Activated CD8-positive, alpha-beta T cell treated with anti-CD3 and anti-CD28 coated beads for 36 hours (primary cell): ENCODE measurements at regions of chr1 and their contacts with region 1.

Region 1: GRCh38 chr1:78114034-78114956 is 68.5 kb downstream of the GIPC2 start:
- DNase-seq: peak; percentile 72
- ATAC-seq: peak; percentile 90
- H3K4me3 Mint-ChIP-seq: no peak overlapping the region
- H3K27ac Mint-ChIP-seq: no peak overlapping the region
- H3K4me1 Mint-ChIP-seq: peaks cover 18% of the 10 kb centered on the region
- H3K27me3 Mint-ChIP-seq: no peaks in the 10 kb centered on the region
- CTCF ChIP-seq: peak; percentile 89

Region 2: DNA sequence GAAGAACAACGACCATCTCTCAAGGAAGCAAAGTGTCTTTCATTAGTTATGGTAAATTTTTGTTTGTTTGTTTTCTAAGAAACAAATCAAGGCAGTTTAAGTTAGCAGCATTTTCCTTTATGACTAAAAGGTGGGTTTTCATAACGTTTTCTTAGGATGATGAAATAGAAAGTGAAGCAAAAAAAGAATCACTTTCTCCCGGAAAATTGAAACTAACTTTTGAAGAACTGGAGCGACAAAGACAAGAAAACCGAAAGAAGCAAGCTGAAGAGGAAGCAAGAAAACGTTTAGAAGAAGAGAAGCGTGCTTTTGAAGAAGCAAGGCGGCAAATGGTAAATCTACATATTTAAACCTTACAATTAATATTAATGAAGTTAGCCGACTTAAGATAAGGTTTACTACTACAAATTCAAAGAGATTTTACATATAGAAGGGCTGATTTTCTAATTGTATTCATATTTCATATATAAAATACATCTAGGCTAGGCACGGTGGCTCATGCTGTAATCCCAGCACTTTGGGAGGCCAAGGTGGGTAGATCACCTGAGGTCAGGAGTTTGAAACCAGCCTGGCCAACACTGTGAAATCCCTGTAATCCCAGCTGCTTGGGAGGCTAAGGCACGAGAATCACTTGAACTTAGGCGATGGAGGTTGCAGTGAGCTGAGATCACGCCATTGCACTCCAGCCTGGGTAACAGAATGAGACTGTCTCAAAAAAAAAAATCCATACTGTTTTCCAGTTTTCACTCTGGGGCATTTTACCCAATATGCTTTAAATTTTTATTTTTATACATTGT is 187.5 kb before region 1 on chr1:
- CTCF ChIA-PET with region 1: interaction called, 5 read pairs
- POLR2A ChIA-PET with region 1: no interaction called
- intact Hi-C with region 1: loop called (anchors 10 kb)
- DNase-seq: no peak
- ATAC-seq: no peak
- H3K4me3 Mint-ChIP-seq: peak overlapping the region; percentile 73
- H3K27ac Mint-ChIP-seq: peak overlapping the region; percentile 74
- H3K4me1 Mint-ChIP-seq: peaks cover 11% of the 10 kb centered on the region
- H3K27me3 Mint-ChIP-seq: no peaks in the 10 kb centered on the region
- CTCF ChIP-seq: no peak

Region 3: GRCh38 chr1:77978969-77979876 is 135.1 kb before region 1 on chr1 and contains the start of gene FUBP1:
- CTCF ChIA-PET with region 1: interaction called, 15 read pairs
- POLR2A ChIA-PET with region 1: interaction called, 3 read pairs
- intact Hi-C with region 1: loop called (anchors 5 kb)
- DNase-seq: peak; percentile 97
- ATAC-seq: peak; percentile 76
- H3K4me3 Mint-ChIP-seq: no peak within 1 kb of the TSS
- H3K27ac Mint-ChIP-seq: no peak within 1 kb of the TSS
- H3K4me1 Mint-ChIP-seq: peaks cover 38% of the 10 kb centered on the region
- H3K27me3 Mint-ChIP-seq: no peaks in the 10 kb centered on the region
- CTCF ChIP-seq: peak; percentile 74
- total RNA-seq, gene FUBP1: 256 to 257 TPM

Region 4: DNA sequence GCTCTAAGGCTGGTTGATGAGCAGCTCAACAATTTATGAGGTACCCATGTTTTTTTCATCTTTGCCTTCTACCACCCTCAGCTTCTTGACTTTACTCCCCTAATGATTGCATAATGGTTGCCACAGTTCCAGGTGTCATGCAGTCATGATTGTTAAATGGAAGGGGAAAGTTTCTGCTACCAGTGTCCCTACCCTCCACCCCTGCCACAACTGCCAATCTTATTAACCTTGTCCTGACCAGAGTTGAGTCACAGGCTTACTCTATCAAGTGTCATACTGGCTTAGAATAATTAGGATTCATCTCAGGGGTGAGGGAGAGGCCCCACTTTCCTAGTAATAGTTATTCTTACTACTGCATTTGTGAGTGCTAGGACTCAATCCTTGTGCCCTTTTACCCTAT is 127.5 kb before region 1 on chr1:
- CTCF ChIA-PET with region 1: interaction called, 15 read pairs
- POLR2A ChIA-PET with region 1: no interaction called
- intact Hi-C with region 1: loop called (anchors 5 kb)
- DNase-seq: peak; percentile 61
- ATAC-seq: peak; percentile 94
- H3K4me3 Mint-ChIP-seq: no peak overlapping the region
- H3K27ac Mint-ChIP-seq: peak overlapping the region; percentile 27
- H3K4me1 Mint-ChIP-seq: peaks cover 58% of the 10 kb centered on the region
- H3K27me3 Mint-ChIP-seq: no peaks in the 10 kb centered on the region
- CTCF ChIP-seq: no peak

Region 5: DNA sequence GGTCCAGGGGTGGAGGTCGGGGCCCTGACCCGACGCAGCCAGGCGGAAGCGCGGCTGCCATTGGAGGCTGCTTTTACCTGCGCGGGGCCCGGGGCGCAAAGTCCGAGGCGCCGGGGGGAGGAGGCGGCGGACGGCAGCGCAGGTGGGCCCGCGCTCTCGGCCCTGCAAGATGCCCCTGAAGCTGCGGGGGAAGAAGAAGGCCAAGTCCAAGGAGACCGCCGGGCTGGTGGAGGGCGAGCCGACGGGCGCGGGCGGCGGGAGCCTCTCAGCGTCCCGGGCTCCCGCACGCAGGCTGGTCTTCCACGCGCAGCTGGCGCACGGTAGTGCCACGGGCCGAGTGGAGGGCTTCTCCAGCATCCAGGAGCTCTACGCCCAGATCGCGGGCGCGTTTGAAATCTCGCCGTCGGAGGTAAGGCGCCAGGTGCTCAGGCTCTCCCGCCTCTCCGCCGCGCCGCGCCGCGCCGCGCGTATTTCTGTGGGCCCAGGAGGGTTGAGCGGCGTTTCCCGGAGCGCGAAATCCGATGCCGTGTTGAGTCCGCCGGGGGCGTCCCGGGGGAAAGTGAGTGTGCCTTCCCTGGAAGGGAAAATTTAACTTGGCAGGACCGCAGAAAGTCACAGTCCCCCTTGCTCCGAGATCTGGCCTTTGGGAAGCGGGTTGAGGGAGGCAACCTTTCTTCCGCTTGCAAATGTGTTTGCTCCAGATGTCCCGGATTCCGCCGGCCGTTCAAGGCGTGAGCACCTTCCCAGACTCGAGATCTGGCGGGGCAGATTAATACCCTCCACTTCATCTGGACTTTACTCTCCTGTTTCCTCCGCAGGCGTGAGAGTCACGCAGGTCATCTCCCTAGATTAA is 68.1 kb before region 1 on chr1 and contains the start of gene GIPC2:
- CTCF ChIA-PET with region 1: interaction called, 11 read pairs
- POLR2A ChIA-PET with region 1: interaction called, 3 read pairs
- intact Hi-C with region 1: loop called (anchors 5 kb)
- DNase-seq: peak; percentile 42
- ATAC-seq: peak; percentile 53
- H3K4me3 Mint-ChIP-seq: peak within 1 kb of the TSS; percentile 76
- H3K27ac Mint-ChIP-seq: peak within 1 kb of the TSS; percentile 30
- H3K4me1 Mint-ChIP-seq: peaks cover 37% of the 10 kb centered on the region
- H3K27me3 Mint-ChIP-seq: peaks cover 42% of the 10 kb centered on the region
- CTCF ChIP-seq: no peak
- total RNA-seq, gene GIPC2: 0.18 to 0.41 TPM

Region 6: GRCh38 chr1:78184460-78185072 is 70.3 kb after region 1 on chr1:
- CTCF ChIA-PET with region 1: no interaction called
- POLR2A ChIA-PET with region 1: no interaction called
- intact Hi-C with region 1: no loop called
- DNase-seq: no peak
- ATAC-seq: no peak
- H3K4me3 Mint-ChIP-seq: no peak overlapping the region
- H3K27ac Mint-ChIP-seq: no peak overlapping the region
- H3K4me1 Mint-ChIP-seq: no peaks in the 10 kb centered on the region
- H3K27me3 Mint-ChIP-seq: peaks cover 3% of the 10 kb centered on the region
- CTCF ChIP-seq: no peak